ENCODE measurements at regions of chr10 and their contacts with region 1.

Region 1: DNA sequence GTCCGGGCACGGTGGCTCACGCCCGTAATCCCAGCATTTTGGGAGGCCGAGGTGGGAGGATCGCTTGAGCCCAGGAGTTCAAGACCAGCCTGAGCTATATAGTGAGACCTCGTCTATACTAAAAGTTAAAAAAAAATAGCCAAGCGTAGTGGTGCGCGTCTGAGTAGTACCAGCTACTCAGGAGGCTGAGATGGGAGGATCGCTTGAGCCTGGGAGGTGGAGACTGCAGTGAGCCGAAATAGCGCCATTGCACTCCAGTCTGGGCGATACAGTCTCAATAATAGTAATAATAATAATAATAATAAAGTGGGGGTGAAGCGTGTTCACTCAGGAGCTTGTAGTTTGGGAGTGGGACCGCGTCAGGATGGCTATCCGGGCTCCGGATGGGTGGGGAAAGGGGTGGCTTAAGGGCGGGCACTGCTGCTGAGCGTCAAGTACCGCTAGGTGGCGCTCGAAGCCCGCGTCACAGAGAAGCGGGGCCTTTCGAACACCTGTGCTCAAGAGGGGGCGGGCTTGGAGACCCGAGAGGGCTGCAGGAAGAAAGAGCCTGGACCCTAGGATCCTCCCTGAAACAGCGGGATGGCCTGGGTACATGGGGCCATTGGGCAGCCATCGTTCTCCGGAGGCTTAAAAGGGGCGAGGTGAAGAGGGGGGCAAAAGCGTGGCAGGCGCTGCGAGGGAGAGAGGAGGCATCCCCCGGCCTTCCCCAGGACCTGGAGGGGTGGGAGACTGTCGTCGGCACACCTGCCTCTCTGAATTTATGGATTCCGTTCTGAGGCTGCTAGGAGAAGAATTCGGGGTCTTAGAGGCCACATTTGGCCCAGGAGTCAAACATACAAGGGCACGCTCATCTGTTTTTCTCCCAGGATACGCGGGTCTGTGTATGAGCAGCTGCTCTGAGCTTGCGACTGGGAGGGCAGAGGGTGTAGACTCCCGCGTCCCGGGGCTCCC is 14.5 kb downstream of the LBX1 start:
- DNase-seq: peak; percentile 47
- H3K4me3 ChIP-seq: no peak overlapping the region
- H3K27ac ChIP-seq: no peak overlapping the region
- H3K4me1 ChIP-seq: peaks cover 14% of the 10 kb centered on the region
- H3K27me3 ChIP-seq: peaks cover 20% of the 10 kb centered on the region
- CTCF ChIP-seq: peak; percentile 52 to 91

Region 2: GRCh38 chr10:101161494-101162299 is 53.0 kb before region 1 on chr10:
- CTCF ChIA-PET with region 1: interaction called, 6 read pairs
- dilution Hi-C with region 1: no loop called
- in situ Hi-C with region 1: loop called in 1 of 2 experiments (anchors 5 kb)
- intact Hi-C with region 1: loop called (anchors 1 kb)
- DNase-seq: peak; percentile 71
- H3K4me3 ChIP-seq: peak overlapping the region in 2 of 3 experiments; percentile 16 to 29
- H3K27ac ChIP-seq: no peak overlapping the region
- H3K4me1 ChIP-seq: peaks cover 9% of the 10 kb centered on the region
- H3K27me3 ChIP-seq: no peaks in the 10 kb centered on the region
- CTCF ChIP-seq: peak; percentile 96 to 98

Region 3: GRCh38 chr10:101291331-101292193 is 76.8 kb after region 1 on chr10:
- CTCF ChIA-PET with region 1: interaction called, 14 read pairs
- dilution Hi-C with region 1: no loop called
- in situ Hi-C with region 1: loop called (anchors 5 kb)
- intact Hi-C with region 1: loop called (anchors 1 kb)
- DNase-seq: no peak
- H3K4me3 ChIP-seq: peak overlapping the region; percentile 41 to 69 (median 42)
- H3K27ac ChIP-seq: no peak overlapping the region
- H3K4me1 ChIP-seq: peaks cover 10% of the 10 kb centered on the region
- H3K27me3 ChIP-seq: peaks cover 8% of the 10 kb centered on the region
- CTCF ChIP-seq: peak; percentile 32 to 72

Region 4: DNA sequence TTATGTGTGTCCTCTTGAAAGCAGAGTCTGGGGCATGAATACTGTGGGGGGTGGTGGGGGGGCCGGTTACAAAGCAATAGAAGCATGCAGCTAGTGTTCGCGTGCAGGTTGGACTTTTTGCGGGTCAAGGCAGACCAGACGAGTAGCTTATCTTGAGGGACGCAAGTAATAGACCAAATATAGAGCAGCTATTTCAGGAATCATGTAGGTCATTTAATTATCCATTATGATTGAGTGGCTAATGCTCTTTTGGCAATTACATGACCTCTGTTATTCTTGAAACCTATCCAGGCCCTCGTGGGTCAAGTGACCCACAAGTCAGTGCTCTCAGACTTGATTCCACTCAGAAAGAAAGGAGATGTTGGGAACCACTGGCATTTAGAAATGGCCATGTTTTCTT is 232.2 kb after region 1 on chr10:
- CTCF ChIA-PET with region 1: interaction called, 3 read pairs
- dilution Hi-C with region 1: no loop called
- in situ Hi-C with region 1: loop called in 1 of 2 experiments (anchors 5 kb)
- intact Hi-C with region 1: loop called (anchors 1 kb)
- DNase-seq: no peak
- H3K4me3 ChIP-seq: no peak overlapping the region
- H3K27ac ChIP-seq: no peak overlapping the region
- H3K4me1 ChIP-seq: no peaks in the 10 kb centered on the region
- H3K27me3 ChIP-seq: no peaks in the 10 kb centered on the region
- CTCF ChIP-seq: no peak

Region 5: DNA sequence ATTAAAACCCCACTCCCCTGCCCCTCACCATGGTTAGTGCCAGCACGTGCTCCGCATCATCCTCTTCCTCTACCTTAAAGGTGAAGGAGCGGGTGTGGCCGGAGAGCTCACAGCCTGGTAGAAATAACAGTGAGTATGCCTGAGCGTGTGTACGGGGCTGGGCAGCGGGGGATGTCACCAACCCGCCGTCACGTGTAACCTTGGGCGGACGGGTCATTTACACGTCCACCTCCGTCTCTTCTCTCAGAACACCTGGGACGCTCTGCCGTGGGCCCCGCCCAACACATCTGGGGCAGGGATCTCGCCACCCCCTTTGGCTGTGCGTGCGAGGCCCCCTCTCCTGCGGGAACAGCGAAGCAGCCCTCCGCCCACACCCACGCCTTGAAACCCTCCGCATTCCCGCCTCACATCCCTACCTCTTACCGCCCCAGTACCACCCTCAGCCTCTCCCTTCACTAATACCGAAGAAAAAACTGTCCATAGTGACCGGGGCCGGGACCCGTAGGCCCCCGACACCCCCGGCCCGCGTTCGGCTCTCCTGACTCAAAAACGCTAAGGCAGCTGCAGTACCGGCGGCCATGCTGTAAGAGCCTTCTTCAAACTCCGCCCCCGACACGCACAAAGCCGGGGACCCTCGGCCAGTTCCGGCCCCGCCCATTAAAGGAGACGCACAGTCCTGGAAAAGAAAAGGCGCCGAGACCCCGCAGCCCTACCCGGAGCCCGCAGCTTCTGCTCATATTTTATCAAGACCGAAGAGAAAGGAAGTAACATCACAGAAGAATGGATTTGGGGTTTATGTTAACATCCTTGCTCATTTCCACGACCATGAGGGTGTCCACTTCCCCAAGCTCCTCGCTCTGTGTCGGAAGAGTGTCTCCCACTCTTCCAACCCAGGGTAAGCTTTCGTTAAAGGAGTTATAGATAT is 568.4 kb after region 1 on chr10 and contains the start of gene NPM3:
- CTCF ChIA-PET with region 1: no interaction called
- dilution Hi-C with region 1: no loop called
- in situ Hi-C with region 1: loop called in 1 of 2 experiments (anchors 25 kb)
- intact Hi-C with region 1: loop called (anchors 1 kb)
- DNase-seq: peak; percentile 63
- H3K4me3 ChIP-seq: peak within 1 kb of the TSS; percentile 81 to 91 (median 87)
- H3K27ac ChIP-seq: peak within 1 kb of the TSS; percentile 53
- H3K4me1 ChIP-seq: peaks cover 41% of the 10 kb centered on the region
- H3K27me3 ChIP-seq: no peaks in the 10 kb centered on the region
- CTCF ChIP-seq: no peak
- total RNA-seq, gene NPM3: 99.4 to 104 TPM

Region 6: GRCh38 chr10:102072673-102073527 is 858.2 kb after region 1 on chr10:
- CTCF ChIA-PET with region 1: no interaction called
- dilution Hi-C with region 1: no loop called
- in situ Hi-C with region 1: no loop called
- intact Hi-C with region 1: loop called (anchors 5 kb)
- DNase-seq: peak; percentile 52
- H3K4me3 ChIP-seq: no peak overlapping the region
- H3K27ac ChIP-seq: no peak overlapping the region
- H3K4me1 ChIP-seq: no peaks in the 10 kb centered on the region
- H3K27me3 ChIP-seq: no peaks in the 10 kb centered on the region
- CTCF ChIP-seq: peak; percentile 95 to 99

Measured in mammary epithelial cell (primary cell).